Caco-2 (cell line): ENCODE measurements at regions of chr3 and their contacts with region 1.

Region 1: GRCh38 chr3:79361748-79362378 is 405.9 kb downstream of the ROBO1 start:
- DNase-seq: peak in 1 of 2 experiments; percentile 19
- H3K4me3 ChIP-seq: no peak overlapping the region
- H3K4me3 Mint-ChIP-seq: no peak overlapping the region
- H3K27ac Mint-ChIP-seq: no peak overlapping the region
- H3K4me1 ChIP-seq: no peaks in the 10 kb centered on the region
- H3K4me1 Mint-ChIP-seq: no peaks in the 10 kb centered on the region
- H3K27me3 ChIP-seq: no peaks in the 10 kb centered on the region
- H3K27me3 Mint-ChIP-seq: peaks cover 3% of the 10 kb centered on the region
- CTCF ChIP-seq: peak; percentile 57 to 65

Region 2: GRCh38 chr3:79086514-79086913 is 275.3 kb before region 1 on chr3:
- CTCF ChIA-PET with region 1: interaction called, 13 read pairs
- POLR2A ChIA-PET with region 1: no interaction called
- intact Hi-C with region 1: loop called (anchors 1 kb)
- DNase-seq: peak; percentile 51 to 67
- H3K4me3 ChIP-seq: no peak overlapping the region
- H3K4me3 Mint-ChIP-seq: no peak overlapping the region
- H3K27ac Mint-ChIP-seq: no peak overlapping the region
- H3K4me1 ChIP-seq: no peaks in the 10 kb centered on the region
- H3K4me1 Mint-ChIP-seq: no peaks in the 10 kb centered on the region
- H3K27me3 ChIP-seq: no peaks in the 10 kb centered on the region
- H3K27me3 Mint-ChIP-seq: peaks cover 8% of the 10 kb centered on the region
- CTCF ChIP-seq: peak; percentile 50 to 78

Region 3: DNA sequence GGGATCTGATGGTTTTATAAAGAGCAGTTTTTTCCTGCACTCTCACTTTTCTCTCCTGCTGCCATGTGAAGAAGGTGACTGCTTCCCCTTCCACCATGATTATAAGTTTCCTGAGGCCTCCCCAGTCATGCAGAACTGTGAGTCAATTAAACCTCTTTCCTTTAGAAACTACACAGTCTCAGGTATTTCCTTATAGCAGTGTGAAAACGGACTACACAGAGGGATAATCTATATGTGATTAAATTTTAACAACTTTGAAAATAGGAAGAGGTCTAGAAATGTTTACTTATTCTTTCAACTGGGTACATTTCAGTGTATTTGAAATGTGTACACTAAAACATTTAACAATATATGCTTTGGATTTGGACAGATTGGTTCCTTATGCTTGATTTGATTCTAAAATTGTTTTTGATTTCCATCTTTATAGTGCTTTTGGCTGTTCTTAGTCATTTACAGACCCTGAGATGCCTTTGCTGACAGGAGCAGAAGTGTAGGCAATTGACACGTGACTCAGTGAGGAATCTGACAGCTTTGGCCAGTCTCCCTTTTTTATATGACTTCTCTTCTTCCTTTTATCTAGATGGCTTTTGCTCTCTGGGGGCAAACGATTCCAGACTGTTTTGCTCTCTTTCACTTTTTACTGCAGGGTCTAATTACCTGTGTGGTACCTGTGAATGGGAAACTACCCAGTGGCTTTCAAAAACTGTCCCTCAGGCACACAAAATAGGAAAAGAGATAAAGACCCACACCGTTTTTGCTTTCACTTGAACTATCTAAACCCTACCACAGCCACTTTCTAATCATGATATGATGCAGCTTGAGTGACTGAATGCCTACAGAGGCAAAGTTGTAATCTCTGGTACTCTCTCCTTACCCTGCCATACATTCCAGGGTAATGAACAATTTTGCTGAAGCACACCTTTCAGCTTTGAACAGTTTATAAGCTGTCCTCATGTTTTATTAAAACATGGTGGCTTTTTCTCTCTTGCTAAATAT is 16.7 kb before region 1 on chr3:
- CTCF ChIA-PET with region 1: no interaction called
- POLR2A ChIA-PET with region 1: no interaction called
- intact Hi-C with region 1: no loop called
- DNase-seq: no peak
- H3K4me3 ChIP-seq: no peak overlapping the region
- H3K4me3 Mint-ChIP-seq: no peak overlapping the region
- H3K27ac Mint-ChIP-seq: no peak overlapping the region
- H3K4me1 ChIP-seq: no peaks in the 10 kb centered on the region
- H3K4me1 Mint-ChIP-seq: no peaks in the 10 kb centered on the region
- H3K27me3 ChIP-seq: no peaks in the 10 kb centered on the region
- H3K27me3 Mint-ChIP-seq: peaks cover 3% of the 10 kb centered on the region
- CTCF ChIP-seq: no peak